ENCODE measurements at regions of chr17 and their contacts with region 1.

Region 1: DNA sequence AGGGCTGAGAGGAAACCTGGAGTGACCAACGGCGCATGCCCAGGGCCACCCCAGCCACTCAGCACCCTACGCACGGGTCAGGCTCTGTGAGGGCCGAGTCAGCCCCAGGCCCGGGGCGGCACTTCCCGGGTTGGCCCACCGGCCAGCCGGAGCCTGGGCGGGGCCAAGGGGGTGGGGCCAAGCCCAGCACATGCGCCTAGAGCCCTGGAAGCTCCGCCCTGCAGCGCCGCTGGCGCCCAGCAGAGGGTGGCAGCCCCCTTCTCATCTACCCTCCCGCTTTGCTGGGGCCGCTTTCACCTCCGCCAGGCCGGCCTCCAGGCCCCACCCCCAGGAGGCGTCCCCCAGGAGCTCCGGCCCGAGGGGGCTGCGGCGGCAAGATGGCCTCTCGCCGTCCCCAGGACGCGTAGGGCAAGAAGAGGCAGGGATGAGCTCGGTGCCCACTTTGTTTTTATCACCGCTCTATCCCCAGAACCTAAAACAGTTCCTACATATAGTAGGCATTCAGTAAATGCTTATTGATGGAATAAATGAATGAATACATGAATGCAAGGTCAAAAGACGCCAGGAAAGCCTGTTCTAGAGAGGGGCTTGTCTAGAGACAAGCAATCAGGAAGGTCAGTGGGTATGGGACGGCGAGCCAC is 31.3 kb downstream of the MYO18A start:
- DNase-seq: peak; percentile 91
- H3K4me3 Mint-ChIP-seq: peak overlapping the region; percentile 69
- H3K27ac Mint-ChIP-seq: peak overlapping the region; percentile 84
- H3K4me1 Mint-ChIP-seq: peaks cover 58% of the 10 kb centered on the region
- H3K27me3 Mint-ChIP-seq: no peaks in the 10 kb centered on the region

Region 2: GRCh38 chr17:28193241-28193640 is 955.7 kb before region 1 on chr17:
- CTCF ChIA-PET with region 1: no interaction called
- POLR2A ChIA-PET with region 1: no interaction called
- DNase-seq: no peak
- H3K4me3 Mint-ChIP-seq: no peak overlapping the region
- H3K27ac Mint-ChIP-seq: no peak overlapping the region
- H3K4me1 Mint-ChIP-seq: peaks cover 6% of the 10 kb centered on the region
- H3K27me3 Mint-ChIP-seq: no peaks in the 10 kb centered on the region

Region 3: DNA sequence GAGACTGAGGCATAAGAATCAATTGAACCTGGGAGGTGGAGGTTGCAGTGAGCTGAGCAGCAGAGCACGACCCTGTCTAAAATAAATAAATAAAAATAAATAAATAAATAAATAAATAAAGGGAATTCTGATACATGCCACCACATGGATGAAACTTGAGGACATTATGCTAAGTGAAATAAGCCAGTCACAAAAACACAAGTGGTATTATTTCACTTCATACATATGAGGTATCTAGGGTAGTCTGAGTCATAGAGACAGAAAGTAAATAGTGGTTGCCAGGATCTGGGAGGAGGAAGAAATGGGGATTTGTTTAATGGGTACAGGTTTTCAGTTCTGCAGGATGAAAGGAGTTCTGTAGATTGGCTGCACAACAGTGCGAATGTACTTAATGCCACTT is 89.6 kb before region 1 on chr17:
- CTCF ChIA-PET with region 1: no interaction called
- POLR2A ChIA-PET with region 1: no interaction called
- DNase-seq: no peak
- H3K4me3 Mint-ChIP-seq: no peak overlapping the region
- H3K27ac Mint-ChIP-seq: no peak overlapping the region
- H3K4me1 Mint-ChIP-seq: no peaks in the 10 kb centered on the region
- H3K27me3 Mint-ChIP-seq: no peaks in the 10 kb centered on the region

Region 4: DNA sequence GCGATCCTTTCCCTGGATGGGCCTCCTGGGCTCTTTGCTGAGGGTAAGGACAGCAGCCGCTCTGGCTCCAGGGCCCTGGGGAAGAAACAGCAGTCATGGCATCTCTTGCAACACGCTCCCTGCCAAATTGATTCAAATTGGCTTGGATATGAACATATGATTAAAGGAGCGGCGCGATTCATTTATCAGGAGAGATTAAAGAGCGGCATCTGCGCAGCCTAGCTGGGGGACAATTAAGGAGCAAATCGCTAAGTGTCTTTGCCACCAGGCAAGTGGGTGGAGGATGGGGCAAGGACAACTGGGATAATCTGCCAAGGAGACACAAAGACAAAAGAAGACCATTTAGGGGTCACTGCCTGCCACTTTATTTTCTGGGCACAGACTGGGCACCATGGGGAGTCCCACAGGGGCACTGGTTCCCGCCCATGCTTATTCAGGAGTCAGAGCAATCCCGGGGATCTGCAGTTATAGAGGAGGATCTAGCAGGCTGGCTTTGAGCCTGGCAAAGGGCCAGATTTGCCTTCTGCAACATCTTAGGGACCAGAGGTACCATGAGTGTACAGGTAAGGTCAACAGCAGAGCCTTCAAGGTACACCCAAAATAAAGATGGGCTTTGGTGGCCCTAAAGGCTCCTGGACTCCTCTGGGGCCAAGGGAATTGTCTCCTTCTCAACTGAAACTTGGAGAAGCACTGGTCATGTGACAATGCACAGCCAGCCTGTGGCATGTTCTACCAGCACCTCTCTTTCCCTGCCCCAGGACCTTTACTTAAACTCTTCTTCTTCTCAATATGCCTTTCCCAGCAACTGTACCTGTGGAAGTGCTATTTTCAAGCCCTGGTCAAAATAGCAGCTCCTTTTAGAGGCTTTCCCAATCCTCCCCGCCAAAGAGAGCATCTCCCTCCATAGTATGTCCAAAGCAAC is 77.9 kb before region 1 on chr17:
- CTCF ChIA-PET with region 1: no interaction called
- POLR2A ChIA-PET with region 1: no interaction called
- DNase-seq: no peak
- H3K4me3 Mint-ChIP-seq: no peak overlapping the region
- H3K27ac Mint-ChIP-seq: peak overlapping the region; percentile 3
- H3K4me1 Mint-ChIP-seq: no peaks in the 10 kb centered on the region
- H3K27me3 Mint-ChIP-seq: no peaks in the 10 kb centered on the region

Region 5: DNA sequence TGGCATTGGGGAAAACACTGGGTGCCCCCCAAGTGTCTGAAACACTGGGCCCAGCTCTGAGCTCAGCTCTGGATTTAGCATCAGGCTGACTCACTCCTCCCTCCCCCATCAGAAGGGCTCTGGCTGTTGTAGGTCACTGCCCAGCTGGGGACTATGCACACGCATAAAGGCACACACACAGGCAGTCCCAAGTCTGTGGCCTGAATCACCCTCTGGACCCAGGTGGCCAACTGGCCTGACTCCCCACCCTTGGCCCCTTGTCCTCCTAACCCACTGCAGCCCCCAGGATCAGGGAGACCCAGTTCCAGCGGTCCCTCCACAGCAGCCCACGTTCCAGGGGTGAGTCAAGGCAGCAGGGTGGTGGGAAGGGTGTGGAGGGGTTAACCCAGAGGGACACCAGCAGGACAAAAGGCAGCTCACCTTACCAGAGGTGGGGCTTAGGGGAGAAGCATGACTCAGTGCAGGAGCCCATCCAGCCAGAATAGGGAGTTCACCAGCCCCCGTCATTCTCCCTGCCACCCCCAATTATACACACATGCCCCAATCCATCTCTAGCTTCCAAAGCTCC is 15.7 kb before region 1 on chr17:
- CTCF ChIA-PET with region 1: interaction called, 39 read pairs
- POLR2A ChIA-PET with region 1: no interaction called
- DNase-seq: no peak
- H3K4me3 Mint-ChIP-seq: no peak overlapping the region
- H3K27ac Mint-ChIP-seq: no peak overlapping the region
- H3K4me1 Mint-ChIP-seq: peaks cover 57% of the 10 kb centered on the region
- H3K27me3 Mint-ChIP-seq: no peaks in the 10 kb centered on the region

Region 6: GRCh38 chr17:29168079-29168758 is 19.3 kb after region 1 on chr17:
- CTCF ChIA-PET with region 1: interaction called, 25 read pairs
- POLR2A ChIA-PET with region 1: no interaction called
- DNase-seq: no peak
- H3K4me3 Mint-ChIP-seq: no peak overlapping the region
- H3K27ac Mint-ChIP-seq: no peak overlapping the region
- H3K4me1 Mint-ChIP-seq: no peaks in the 10 kb centered on the region
- H3K27me3 Mint-ChIP-seq: no peaks in the 10 kb centered on the region

Region 7: GRCh38 chr17:29195465-29196081 is 46.7 kb after region 1 on chr17:
- CTCF ChIA-PET with region 1: interaction called, 15 read pairs
- POLR2A ChIA-PET with region 1: no interaction called
- DNase-seq: no peak
- H3K4me3 Mint-ChIP-seq: no peak overlapping the region
- H3K27ac Mint-ChIP-seq: no peak overlapping the region
- H3K4me1 Mint-ChIP-seq: no peaks in the 10 kb centered on the region
- H3K27me3 Mint-ChIP-seq: peaks cover 27% of the 10 kb centered on the region

Region 8: DNA sequence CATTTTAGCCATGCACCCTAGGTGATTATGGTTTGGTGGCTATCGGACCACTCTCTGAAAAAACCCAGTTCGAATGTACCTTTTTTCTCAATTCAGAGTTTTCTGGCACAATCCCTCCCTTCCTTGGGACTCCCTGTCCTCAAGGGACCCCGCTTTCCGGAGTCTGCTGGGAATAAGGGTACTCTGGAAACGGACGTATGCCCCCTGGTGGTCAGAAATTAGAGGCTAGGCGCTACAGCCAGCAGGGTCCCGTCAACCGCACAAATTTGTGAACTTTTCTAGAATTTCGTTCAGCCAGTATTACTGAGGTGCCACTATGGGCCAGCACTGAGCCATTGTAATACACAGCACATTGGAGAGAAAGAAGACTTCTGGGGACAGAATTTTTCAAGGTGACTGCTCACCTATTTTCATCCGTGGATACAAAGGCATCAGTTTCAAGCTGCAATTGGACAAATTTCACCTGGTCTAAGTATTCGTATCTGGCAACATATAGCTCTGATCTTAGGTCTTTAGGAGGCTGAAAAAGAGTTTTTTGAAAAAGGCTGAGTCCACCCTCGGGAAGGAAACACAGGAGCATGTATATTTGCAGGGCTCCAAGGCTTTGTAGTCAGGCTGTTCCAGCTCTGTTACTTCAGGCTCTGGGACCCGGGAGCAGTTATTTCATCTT is 70.6 kb after region 1 on chr17:
- CTCF ChIA-PET with region 1: interaction called, 30 read pairs
- POLR2A ChIA-PET with region 1: no interaction called
- DNase-seq: peak; percentile 79
- H3K4me3 Mint-ChIP-seq: no peak overlapping the region
- H3K27ac Mint-ChIP-seq: no peak overlapping the region
- H3K4me1 Mint-ChIP-seq: peaks cover 8% of the 10 kb centered on the region
- H3K27me3 Mint-ChIP-seq: peaks cover 5% of the 10 kb centered on the region

Measured in activated CD4-positive, alpha-beta T cell treated with anti-CD3 and anti-CD28 coated beads, Interleukin-2, amount 10 ng/mL, durations not matched to agents 7 days and 5 days (primary cell).